GM23248 (cell line): ENCODE measurements at regions of chr17 and their contacts with region 1.

Region 1: DNA sequence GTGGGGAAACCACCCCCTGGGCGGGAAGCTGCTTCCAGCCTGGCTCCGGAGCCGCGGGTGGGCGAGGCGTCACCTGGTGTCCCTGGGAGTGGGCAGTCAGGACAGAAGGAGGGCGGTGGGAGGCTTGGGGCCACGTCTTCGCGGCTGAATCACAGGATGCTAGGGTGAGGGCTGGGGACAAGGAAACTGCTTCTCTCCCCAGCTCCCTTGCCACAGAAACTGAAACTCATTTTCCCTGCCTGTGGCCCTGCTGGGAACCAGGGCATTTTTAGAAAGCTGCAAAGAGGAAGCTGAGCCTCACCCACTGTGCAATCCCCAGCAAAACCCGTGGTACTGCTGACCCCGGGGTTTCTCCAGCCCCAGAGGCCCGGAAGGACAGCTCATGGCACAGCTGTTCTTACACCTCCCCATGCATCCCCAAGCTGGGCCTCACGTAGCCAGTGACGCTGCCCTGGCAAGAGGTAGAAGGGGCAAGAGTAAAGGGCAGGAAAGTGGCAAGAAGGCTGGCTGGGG is 8.2 kb downstream of the RHBDF2 start:
- DNase-seq: peak; percentile 76
- H3K4me3 ChIP-seq: no peak overlapping the region
- H3K27ac ChIP-seq: peak overlapping the region; percentile 12; the same call in 1 of the 2 replicates
- H3K4me1 ChIP-seq: peaks cover 8% of the 10 kb centered on the region; the same call in 1 of the 2 replicates
- H3K27me3 ChIP-seq: no peaks in the 10 kb centered on the region

Region 2: GRCh38 chr17:76585818-76586593 is 93.0 kb after region 1 on chr17 and contains the start of gene ST6GALNAC2:
- in situ Hi-C with region 1: loop called (anchors 25 kb)
- DNase-seq: peak; percentile 69
- H3K4me3 ChIP-seq: peak within 1 kb of the TSS; percentile 66
- H3K27ac ChIP-seq: no peak within 1 kb of the TSS
- H3K4me1 ChIP-seq: no peaks in the 10 kb centered on the region
- H3K27me3 ChIP-seq: peaks cover 17% of the 10 kb centered on the region
- total RNA-seq, gene ST6GALNAC2: 0.65 and 1.4 TPM in 2 replicates